ENCODE measurements at regions of chr1 and their contacts with region 1.

Region 1: GRCh38 chr1:211492511-211493132 is 660 bp upstream of the RD3 start:
- DNase-seq: no peak
- H3K4me3 ChIP-seq: no peak overlapping the region
- H3K27ac ChIP-seq: no peak overlapping the region
- H3K4me1 ChIP-seq: no peaks in the 10 kb centered on the region
- H3K27me3 ChIP-seq: peaks cover 7% of the 10 kb centered on the region
- CTCF ChIP-seq: no peak
- POLR2A ChIP-seq: no peak

Region 2: GRCh38 chr1:211335522-211336157 is 157.0 kb before region 1 on chr1:
- intact Hi-C with region 1: loop called (anchors 10 kb)
- DNase-seq: no peak
- H3K4me3 ChIP-seq: no peak overlapping the region
- H3K27ac ChIP-seq: no peak overlapping the region
- H3K4me1 ChIP-seq: peaks cover 0 to 3% of the 10 kb centered on the region in 2 donors
- H3K27me3 ChIP-seq: no peaks in the 10 kb centered on the region
- CTCF ChIP-seq: no peak
- POLR2A ChIP-seq: no peak

Region 3: DNA sequence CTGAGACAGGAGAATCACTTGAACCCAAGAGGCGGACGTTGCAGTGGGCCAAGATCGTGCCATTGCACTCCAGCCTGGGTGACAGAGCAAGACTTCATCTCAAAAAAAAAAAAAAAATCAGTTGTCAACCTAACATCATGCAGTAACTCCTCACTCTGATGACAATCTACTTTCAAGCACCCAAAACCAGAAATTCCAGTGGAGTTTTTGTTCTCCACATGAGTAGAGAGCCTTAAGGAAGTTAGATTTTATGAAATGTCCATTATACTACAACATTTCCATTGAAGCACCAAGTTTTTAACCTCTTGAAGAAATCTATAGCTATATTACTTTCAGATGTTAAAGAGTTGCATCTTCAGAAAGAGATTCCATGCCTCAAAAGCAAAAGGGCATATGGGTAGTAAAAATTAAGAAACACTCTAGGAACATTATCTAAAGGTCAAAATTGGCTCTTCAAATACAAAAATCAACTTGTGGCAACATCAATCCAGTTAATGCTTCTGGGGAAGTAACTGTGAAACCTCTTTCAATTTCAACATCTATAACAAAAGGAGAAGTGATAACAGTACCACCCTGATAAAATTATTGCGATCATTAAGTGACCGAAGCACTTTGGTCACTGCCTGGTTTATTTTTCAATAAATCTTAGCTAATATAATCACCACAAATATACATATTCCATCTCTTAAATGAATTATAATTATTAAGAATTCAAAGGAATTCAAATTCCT is 330.2 kb after region 1 on chr1:
- intact Hi-C with region 1: no loop called
- DNase-seq: no peak
- H3K4me3 ChIP-seq: no peak overlapping the region
- H3K27ac ChIP-seq: no peak overlapping the region
- H3K4me1 ChIP-seq: peaks cover 11 to 21% of the 10 kb centered on the region in 2 donors
- H3K27me3 ChIP-seq: no peaks in the 10 kb centered on the region
- CTCF ChIP-seq: no peak
- POLR2A ChIP-seq: no peak

Measured in thyroid gland (tissue), 4 donors.